RWPE1 (cell line): ENCODE measurements at regions of chr17 and their contacts with region 1.

Region 1: GRCh38 chr17:63946440-63947367 is 14.6 kb upstream of the CD79B start:
- DNase-seq: peak; percentile 52
- H3K27ac ChIP-seq: no peak overlapping the region
- CTCF ChIP-seq: peak; percentile 73

Region 2: GRCh38 chr17:63919311-63919723 is 27.4 kb before region 1 on chr17:
- CTCF ChIA-PET with region 1: interaction called, 15 read pairs
- POLR2A ChIA-PET with region 1: no interaction called
- DNase-seq: peak; percentile 83
- H3K27ac ChIP-seq: no peak overlapping the region
- CTCF ChIP-seq: peak; percentile 95

Region 3: GRCh38 chr17:63988741-63989621 is 42.3 kb after region 1 on chr17:
- CTCF ChIA-PET with region 1: interaction called, 10 read pairs
- POLR2A ChIA-PET with region 1: no interaction called
- DNase-seq: no peak
- H3K27ac ChIP-seq: no peak overlapping the region
- CTCF ChIP-seq: no peak

Region 4: GRCh38 chr17:64281962-64282727 is 335.4 kb after region 1 on chr17:
- CTCF ChIA-PET with region 1: interaction called, 10 read pairs
- POLR2A ChIA-PET with region 1: no interaction called
- DNase-seq: peak; percentile 64
- H3K27ac ChIP-seq: no peak overlapping the region
- CTCF ChIP-seq: peak; percentile 89